ENCODE measurements at regions of chr3 and their contacts with region 1.

Region 1: DNA sequence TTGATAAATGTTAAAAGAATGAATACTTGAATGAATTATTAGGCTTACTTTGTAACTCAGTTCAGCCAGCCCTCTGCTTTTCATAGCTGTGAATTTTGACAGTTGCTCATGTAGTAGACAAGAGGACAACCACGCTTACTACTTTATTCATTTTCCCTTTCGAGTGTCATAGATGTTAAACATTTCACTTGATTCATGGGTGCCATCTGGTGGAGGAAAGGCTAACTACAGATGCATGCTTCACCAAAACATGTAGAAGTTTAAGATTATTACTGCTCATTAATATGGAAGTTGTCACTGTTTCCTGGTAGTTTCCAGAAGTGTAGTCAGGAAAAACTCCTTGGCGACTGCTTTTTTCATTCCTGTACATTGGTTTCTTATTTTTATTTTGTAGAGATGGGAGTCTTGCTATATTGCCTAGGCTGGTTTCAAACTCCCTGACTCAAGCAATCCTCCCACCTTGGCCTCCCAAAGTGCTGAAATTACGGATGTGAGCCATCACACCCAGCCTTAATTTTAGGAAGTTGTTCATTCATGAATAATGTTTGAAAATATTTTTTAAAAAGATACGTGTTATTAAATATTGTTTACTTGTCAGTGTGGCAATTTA is 163.2 kb downstream of the B3GALNT1 start:
- DNase-seq: peak; percentile 88
- H3K4me3 Mint-ChIP-seq: no peak overlapping the region
- H3K27ac Mint-ChIP-seq: no peak overlapping the region
- H3K4me1 Mint-ChIP-seq: no peaks in the 10 kb centered on the region
- H3K27me3 Mint-ChIP-seq: no peaks in the 10 kb centered on the region

Region 2: DNA sequence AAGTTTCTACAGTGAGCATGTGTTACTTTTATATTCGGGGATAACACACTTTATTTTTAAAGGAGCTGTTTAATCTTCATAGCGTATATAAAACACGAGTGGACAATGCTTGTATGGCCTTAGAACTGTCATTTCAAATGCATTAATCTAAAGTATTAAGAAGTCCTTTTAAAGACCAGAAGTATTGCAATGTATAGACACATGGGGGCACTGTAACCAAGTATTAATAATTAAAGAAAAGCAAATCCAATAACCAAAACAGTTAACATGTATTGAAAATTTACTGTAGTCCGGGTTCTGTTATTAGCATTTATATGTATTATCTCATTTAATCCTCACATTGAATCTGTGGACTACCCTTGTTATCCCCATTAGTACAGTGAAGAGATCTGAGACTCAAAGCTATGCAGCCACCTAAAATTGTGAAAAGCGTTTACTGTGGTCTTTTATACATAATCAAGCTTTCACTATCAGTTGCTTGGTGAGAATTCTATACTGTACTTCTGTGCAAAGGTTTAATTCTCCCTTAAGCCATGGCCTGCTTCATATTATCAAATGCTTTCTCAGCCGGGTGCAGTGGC is 254.9 kb before region 1 on chr3:
- CTCF ChIA-PET with region 1: interaction called, 5 read pairs
- intact Hi-C with region 1: loop called (anchors 1 kb)
- DNase-seq: no peak
- H3K4me3 Mint-ChIP-seq: no peak overlapping the region
- H3K27ac Mint-ChIP-seq: no peak overlapping the region
- H3K4me1 Mint-ChIP-seq: no peaks in the 10 kb centered on the region
- H3K27me3 Mint-ChIP-seq: no peaks in the 10 kb centered on the region

Region 3: DNA sequence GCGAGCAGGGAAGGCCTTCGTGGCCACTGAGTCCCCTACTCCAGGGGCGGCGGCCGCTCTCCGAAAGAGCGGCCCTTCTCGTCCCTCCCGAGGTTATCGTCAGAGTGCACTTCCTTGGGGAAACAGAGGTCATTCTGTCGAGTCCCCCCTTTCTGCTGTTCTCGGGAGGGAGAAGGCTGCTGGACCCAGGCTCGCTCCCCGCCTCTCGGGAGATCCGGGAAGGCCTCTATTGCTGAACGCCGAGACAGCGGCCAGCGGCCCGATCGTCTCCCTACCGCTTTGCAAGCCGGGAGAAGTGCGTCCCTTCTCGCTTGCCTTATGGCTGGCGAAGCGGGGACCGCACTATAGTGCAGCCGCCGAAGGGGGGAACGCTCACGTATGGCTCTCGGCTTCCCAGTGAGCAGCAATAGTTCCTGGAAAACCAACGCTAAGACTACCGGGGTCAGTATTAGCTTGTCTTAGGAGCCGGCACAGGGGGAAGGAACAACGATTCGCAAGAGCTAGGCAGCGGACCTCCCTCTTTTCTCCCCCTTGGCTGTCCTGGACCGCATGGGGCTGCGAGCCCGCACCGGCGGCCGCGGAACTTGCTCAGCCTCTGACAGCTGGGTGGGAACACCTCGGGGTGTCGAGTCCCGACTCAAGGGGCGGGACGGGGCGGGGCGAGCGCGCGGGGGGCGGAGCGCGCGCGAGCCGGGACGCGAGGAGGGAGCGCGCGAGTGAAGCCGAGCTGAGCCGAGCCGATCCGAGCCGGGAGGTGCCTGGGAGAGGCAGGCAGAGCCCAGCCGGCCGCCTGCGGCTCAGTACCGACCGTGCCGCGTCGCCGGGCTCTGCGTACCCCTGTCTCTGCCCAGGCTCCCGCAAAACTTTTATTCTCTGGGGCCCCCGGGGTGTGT is 186.9 kb before region 1 on chr3:
- CTCF ChIA-PET with region 1: interaction called, 3 read pairs
- intact Hi-C with region 1: loop called (anchors 1 kb)
- DNase-seq: peak; percentile 90
- H3K4me3 Mint-ChIP-seq: peak overlapping the region; percentile 86
- H3K27ac Mint-ChIP-seq: peak overlapping the region; percentile 86
- H3K4me1 Mint-ChIP-seq: peaks cover 23% of the 10 kb centered on the region
- H3K27me3 Mint-ChIP-seq: peaks cover 12% of the 10 kb centered on the region

Region 4: DNA sequence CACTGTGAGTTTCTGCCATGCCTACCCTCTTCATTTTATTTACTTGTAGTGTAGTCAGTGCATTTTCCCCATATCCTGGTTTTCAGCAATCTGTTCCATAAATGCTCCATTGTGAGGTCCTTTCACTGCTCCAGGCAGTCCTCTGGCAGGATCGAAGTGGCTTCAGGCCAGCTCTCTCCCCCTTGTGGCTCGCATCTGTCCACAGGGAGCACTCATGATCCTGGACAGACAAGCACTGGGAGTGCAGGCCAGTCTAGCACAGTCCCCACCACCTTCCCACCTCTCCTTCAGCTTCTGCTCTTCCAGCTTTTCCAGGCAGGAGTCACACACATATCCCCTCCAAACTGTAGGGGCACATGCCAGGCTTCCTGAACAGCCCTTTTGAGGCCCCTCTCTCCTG is 12.4 kb before region 1 on chr3:
- CTCF ChIA-PET with region 1: interaction called, 17 read pairs
- intact Hi-C with region 1: no loop called
- DNase-seq: no peak
- H3K4me3 Mint-ChIP-seq: no peak overlapping the region
- H3K27ac Mint-ChIP-seq: no peak overlapping the region
- H3K4me1 Mint-ChIP-seq: no peaks in the 10 kb centered on the region
- H3K27me3 Mint-ChIP-seq: peaks cover 3% of the 10 kb centered on the region

Region 5: GRCh38 chr3:161682715-161683114 is 740.7 kb after region 1 on chr3:
- CTCF ChIA-PET with region 1: no interaction called
- intact Hi-C with region 1: no loop called
- DNase-seq: no peak
- H3K4me3 Mint-ChIP-seq: no peak overlapping the region
- H3K27ac Mint-ChIP-seq: no peak overlapping the region
- H3K4me1 Mint-ChIP-seq: no peaks in the 10 kb centered on the region
- H3K27me3 Mint-ChIP-seq: no peaks in the 10 kb centered on the region